A549 (cell line): ENCODE measurements at regions of chr7 and their contacts with region 1.

Region 1: DNA sequence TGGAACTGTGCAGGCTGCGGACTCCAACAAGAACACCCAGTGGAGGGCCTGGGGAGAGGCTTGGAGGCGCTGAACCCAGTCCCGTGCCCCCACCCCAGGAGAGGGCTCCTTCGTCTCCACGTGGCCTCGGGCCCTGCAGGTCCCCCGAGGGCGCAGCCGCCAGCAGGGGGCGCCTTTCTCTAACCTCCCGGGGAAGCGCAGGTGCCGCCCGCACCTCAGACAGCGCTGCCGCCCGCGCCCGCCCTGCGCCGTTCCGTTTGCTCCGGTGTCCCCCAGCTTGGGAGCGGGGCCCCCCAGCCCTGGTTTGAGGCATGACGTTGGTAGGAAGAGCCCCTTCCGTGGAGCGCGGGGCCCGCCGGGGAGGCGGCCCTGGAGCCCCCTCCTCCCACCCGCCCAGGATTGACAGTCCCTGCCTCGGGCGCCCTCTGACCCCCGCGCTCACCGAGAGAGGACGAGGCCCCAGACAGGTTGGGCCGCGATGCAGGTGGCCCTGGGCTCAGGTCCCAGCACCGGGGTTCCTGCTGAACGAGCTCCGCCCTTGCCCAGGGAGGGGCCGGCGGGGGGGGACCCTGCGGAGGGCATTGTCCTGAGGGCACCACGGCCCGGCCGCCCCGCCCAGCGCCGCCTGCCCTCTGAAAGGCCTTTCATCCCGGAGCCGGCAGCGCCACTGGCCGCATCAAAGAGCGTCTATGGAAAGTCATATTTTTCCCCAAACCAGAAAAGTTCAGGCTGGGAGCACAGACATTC is 42.8 kb downstream of the FOXL3 start:
- DNase-seq: peak; percentile 76 to 81
- ATAC-seq: peak; percentile 94 to 99
- H3K4me3 ChIP-seq: peak overlapping the region; percentile 64
- H3K27ac ChIP-seq: peak overlapping the region; percentile 81 to 87
- H3K4me1 ChIP-seq: peaks cover 12% of the 10 kb centered on the region
- CTCF ChIP-seq: peak; percentile 88
- EP300 ChIP-seq: no peak
- POLR2A ChIP-seq: no peak
- RAD21 ChIP-seq: peak; percentile 83 to 94

Region 2: DNA sequence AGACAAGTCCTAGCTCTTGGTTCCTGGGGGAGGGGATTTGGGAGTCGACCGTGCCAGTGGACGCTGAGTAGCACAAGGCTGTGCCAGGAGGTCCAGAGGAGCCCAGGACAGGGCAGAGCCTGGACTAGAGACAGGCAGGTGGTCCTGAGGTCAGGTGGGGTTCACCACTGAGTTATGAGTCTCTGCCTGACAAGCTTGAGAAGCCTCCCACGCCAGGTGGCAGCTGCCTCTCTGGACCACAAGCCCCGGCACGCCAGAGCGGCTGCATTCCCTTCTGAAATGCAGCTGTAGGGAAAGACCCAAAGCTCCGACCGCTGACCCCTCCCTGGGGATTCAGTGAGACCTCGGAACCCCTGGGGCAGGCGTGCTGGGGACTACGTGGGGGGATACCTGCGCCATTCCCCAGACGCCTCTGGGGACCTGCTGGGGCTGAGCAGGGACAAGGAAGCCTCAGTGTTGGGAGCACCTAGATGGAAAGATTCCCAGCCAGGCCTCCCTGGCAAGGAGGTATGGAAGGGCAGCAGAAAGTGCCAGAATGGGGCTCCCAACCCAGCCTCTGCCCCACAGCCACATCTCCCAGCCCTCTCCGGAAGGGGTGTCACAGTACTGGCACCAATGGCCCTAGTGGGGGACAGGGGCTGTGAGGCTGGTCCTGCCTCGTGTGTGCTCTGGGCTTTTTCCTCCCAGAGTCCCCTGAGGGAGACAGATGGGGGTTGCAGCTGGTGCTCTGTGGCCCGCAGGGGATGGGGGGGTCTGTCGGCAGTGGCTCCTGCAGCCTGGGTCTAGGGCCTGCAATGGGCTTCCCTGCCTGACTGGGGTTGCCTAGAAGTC is 157.9 kb after region 1 on chr7:
- CTCF ChIA-PET with region 1: no interaction called
- POLR2A ChIA-PET with region 1: no interaction called
- DNase-seq: no peak
- ATAC-seq: peak in 1 of 2 experiments; percentile 24; a peak in 3 of 6 replicates
- H3K4me3 ChIP-seq: no peak overlapping the region
- H3K27ac ChIP-seq: no peak overlapping the region; a peak in 1 of 6 replicates
- H3K4me1 ChIP-seq: no peaks in the 10 kb centered on the region
- CTCF ChIP-seq: no peak
- EP300 ChIP-seq: no peak
- POLR2A ChIP-seq: no peak
- RAD21 ChIP-seq: no peak

Region 3: GRCh38 chr7:518630-519483 is 186.0 kb after region 1 on chr7:
- CTCF ChIA-PET with region 1: interaction called, 19 read pairs
- POLR2A ChIA-PET with region 1: interaction called, 8 read pairs
- DNase-seq: peak; percentile 60 to 87
- ATAC-seq: peak; percentile 59 to 76
- H3K4me3 ChIP-seq: peak overlapping the region; percentile 74
- H3K27ac ChIP-seq: peak overlapping the region; percentile 89 to 94
- H3K4me1 ChIP-seq: peaks cover 36% of the 10 kb centered on the region
- CTCF ChIP-seq: no peak
- EP300 ChIP-seq: no peak
- POLR2A ChIP-seq: peak; percentile 61
- RAD21 ChIP-seq: no peak; a peak in 1 of 5 replicates

Region 4: DNA sequence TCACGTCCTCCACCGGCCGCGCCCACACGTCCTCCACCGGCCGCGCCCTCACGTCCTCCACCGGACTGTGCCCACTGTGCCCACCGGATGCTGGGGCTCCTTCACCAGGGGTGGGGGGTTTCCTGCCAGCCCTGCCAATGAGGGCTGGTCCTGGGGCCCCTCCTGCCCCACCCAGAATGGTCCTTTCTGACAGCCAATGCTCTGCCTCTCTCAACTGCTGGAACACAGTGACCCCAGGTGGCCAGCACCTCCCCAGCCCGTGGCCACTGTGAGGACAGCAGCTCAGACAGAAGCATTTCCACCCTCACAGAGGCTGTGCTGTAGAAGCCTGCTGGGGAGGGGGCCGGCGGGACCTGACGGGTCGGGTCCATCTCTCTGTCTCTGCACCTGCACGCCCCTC is 303.6 kb after region 1 on chr7:
- CTCF ChIA-PET with region 1: interaction called, 78 read pairs
- POLR2A ChIA-PET with region 1: no interaction called
- DNase-seq: peak; percentile 84 to 85
- ATAC-seq: peak; percentile 98 to 99
- H3K4me3 ChIP-seq: peak overlapping the region; percentile 60
- H3K27ac ChIP-seq: peak overlapping the region; percentile 71 to 78
- H3K4me1 ChIP-seq: peaks cover 11% of the 10 kb centered on the region
- CTCF ChIP-seq: peak; percentile 86
- EP300 ChIP-seq: no peak
- POLR2A ChIP-seq: no peak
- RAD21 ChIP-seq: peak; percentile 94